Psoas muscle (tissue), 8 donors: ENCODE measurements at regions of chrX and their contacts with region 1.

Region 1: DNA sequence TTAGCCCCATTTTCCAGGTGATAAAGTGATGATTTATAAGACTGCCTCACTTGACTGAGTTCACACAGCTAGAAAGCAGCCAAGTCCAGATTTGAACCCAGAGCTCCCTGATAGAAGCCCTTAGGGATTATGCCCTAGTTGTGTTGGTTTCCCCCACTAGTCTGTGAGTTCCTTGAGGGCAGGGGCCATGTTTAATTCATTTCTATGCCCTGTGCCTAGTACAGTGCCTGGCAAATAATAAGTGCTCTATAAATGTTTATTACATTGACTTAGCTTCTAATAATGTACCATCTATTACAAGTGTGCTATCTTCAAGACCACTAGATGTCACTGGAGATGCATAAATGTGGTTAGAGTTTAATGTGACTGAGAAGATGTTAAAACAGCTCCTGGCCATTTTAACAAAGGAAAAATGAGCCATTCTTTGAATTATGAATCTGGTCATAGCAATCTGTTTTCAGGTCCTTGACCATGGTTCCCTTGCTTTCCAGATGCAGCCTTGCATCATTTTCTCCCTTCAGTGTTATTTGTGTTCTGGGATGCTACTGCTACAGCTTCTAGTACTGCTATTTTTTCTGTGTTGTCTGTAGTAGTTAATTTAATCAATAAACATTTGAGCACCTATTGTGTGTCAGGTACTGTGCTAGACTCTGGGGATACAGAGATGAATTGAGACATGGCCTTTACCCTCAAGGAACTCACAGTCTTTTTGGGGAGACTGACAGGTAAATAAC is 43.2 kb downstream of the SLC9A6 start:
- DNase-seq: no peak
- ATAC-seq: peak; percentile 61 to 79 (median 76)
- H3K4me3 ChIP-seq: no peak overlapping the region
- H3K27ac ChIP-seq: no peak overlapping the region
- H3K4me1 ChIP-seq: peaks cover 5% of the 10 kb centered on the region
- H3K27me3 ChIP-seq: no peaks in the 10 kb centered on the region
- CTCF ChIP-seq: peak; percentile 72

Region 2: GRCh38 chrX:135094726-135095125 is 933.7 kb before region 1 on chrX:
- intact Hi-C with region 1: no loop called
- DNase-seq: peak in 1 of 2 donors; percentile 51
- ATAC-seq: no peak
- H3K4me3 ChIP-seq: no peak overlapping the region
- H3K27ac ChIP-seq: no peak overlapping the region
- H3K4me1 ChIP-seq: no peaks in the 10 kb centered on the region
- H3K27me3 ChIP-seq: peaks cover 0 to 10% (median 0%) of the 10 kb centered on the region in 3 donors
- CTCF ChIP-seq: no peak

Region 3: GRCh38 chrX:136047969-136048368 is 19.6 kb after region 1 on chrX:
- intact Hi-C with region 1: no loop called
- DNase-seq: no peak
- ATAC-seq: peak in 1 of 4 donors; percentile 16
- H3K4me3 ChIP-seq: no peak overlapping the region
- H3K27ac ChIP-seq: peak overlapping the region; percentile 30
- H3K4me1 ChIP-seq: peaks cover 4% of the 10 kb centered on the region
- H3K27me3 ChIP-seq: peaks cover 0 to 10% (median 0%) of the 10 kb centered on the region in 3 donors
- CTCF ChIP-seq: no peak

Region 4: GRCh38 chrX:136147315-136147901 is 119.0 kb after region 1 on chrX and contains the start of gene FHL1:
- intact Hi-C with region 1: loop called in 1 of 2 experiments (anchors 5 kb)
- DNase-seq: peak; percentile 72 to 80
- ATAC-seq: peak; percentile 72 to 88 (median 86)
- H3K4me3 ChIP-seq: peak within 1 kb of the TSS; percentile 71
- H3K27ac ChIP-seq: peak within 1 kb of the TSS; percentile 69
- H3K4me1 ChIP-seq: no peaks in the 10 kb centered on the region
- H3K27me3 ChIP-seq: peaks cover 0 to 14% (median 0%) of the 10 kb centered on the region in 3 donors
- CTCF ChIP-seq: no peak
- total RNA-seq, gene FHL1: 6,074 to 8,382 (median 6,962) TPM

Region 5: GRCh38 chrX:136162831-136163570 is 134.6 kb after region 1 on chrX:
- intact Hi-C with region 1: loop called (anchors 1 to 5 kb)
- DNase-seq: peak; percentile 55 to 78
- ATAC-seq: peak; percentile 74 to 85 (median 78)
- H3K4me3 ChIP-seq: no peak overlapping the region
- H3K27ac ChIP-seq: peak overlapping the region; percentile 32
- H3K4me1 ChIP-seq: peaks cover 12% of the 10 kb centered on the region
- H3K27me3 ChIP-seq: peaks cover 0 to 8% (median 0%) of the 10 kb centered on the region in 3 donors
- CTCF ChIP-seq: peak; percentile 80

Region 6: GRCh38 chrX:136209016-136209738 is 180.8 kb after region 1 on chrX:
- intact Hi-C with region 1: loop called in 1 of 2 experiments (anchors 2 kb)
- DNase-seq: peak; percentile 57 to 75
- ATAC-seq: peak in 2 of 4 donors; percentile 1 to 4
- H3K4me3 ChIP-seq: no peak overlapping the region
- H3K27ac ChIP-seq: peak overlapping the region; percentile 95
- H3K4me1 ChIP-seq: peaks cover 9% of the 10 kb centered on the region
- H3K27me3 ChIP-seq: no peaks in the 10 kb centered on the region
- CTCF ChIP-seq: peak; percentile 47

Region 7: DNA sequence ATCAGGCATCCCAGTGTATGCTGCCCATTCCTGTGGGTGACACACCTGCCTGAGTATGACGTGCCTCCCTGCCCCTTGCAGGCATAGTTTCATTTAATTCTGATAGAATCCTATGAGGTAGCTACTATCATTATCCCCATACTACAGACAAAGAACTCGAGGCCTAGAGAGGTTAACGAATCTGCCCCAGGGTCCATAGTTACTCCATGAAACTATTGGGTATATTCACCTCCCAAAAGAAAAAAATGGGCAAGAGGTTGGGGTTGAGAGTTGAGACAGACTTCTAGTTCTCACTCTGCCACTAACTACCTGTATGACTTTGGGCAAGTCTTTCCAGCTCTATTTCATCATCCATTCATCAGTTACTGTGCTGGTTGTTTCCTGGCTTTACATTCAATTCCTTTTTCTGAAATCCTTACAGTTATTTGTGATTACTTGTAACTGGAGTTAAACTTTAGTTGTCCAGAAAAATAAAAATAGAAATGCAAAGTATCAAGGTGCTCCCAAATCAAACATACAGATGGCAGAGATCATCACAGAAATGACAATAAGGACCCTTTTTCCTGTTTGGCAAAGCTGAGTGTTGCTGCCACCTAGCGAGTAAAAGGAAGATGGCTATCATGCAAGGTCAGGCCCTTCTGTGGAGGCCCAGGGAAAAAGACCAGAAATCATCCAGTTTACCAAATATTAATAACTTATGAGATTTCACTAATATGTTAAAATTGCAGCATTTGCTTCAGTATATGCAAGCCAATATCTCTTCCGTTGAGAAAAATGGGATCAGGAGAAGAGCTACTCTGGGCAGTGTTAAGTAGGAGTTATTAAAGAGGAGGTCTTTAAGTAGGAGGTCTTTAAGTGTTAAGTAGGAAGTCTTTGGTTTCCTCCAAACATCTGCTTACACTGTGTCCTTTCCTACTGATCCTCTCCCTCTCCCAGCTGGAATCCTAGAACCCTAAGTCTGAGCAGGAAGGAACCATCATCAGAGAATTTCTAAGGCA is 239.9 kb after region 1 on chrX:
- intact Hi-C with region 1: loop called (anchors 5 kb)
- DNase-seq: no peak
- ATAC-seq: peak; percentile 52 to 76 (median 62)
- H3K4me3 ChIP-seq: no peak overlapping the region
- H3K27ac ChIP-seq: no peak overlapping the region
- H3K4me1 ChIP-seq: no peaks in the 10 kb centered on the region
- H3K27me3 ChIP-seq: no peaks in the 10 kb centered on the region
- CTCF ChIP-seq: peak; percentile 82

Region 8: GRCh38 chrX:136491832-136492231 is 463.4 kb after region 1 on chrX:
- intact Hi-C with region 1: loop called in 1 of 2 experiments (anchors 5 kb)
- DNase-seq: no peak
- ATAC-seq: no peak
- H3K4me3 ChIP-seq: no peak overlapping the region
- H3K27ac ChIP-seq: no peak overlapping the region
- H3K4me1 ChIP-seq: no peaks in the 10 kb centered on the region
- H3K27me3 ChIP-seq: peaks cover 0 to 14% (median 0%) of the 10 kb centered on the region in 3 donors
- CTCF ChIP-seq: no peak